ENCODE measurements at regions of chr6 and their contacts with region 1.

Region 1: DNA sequence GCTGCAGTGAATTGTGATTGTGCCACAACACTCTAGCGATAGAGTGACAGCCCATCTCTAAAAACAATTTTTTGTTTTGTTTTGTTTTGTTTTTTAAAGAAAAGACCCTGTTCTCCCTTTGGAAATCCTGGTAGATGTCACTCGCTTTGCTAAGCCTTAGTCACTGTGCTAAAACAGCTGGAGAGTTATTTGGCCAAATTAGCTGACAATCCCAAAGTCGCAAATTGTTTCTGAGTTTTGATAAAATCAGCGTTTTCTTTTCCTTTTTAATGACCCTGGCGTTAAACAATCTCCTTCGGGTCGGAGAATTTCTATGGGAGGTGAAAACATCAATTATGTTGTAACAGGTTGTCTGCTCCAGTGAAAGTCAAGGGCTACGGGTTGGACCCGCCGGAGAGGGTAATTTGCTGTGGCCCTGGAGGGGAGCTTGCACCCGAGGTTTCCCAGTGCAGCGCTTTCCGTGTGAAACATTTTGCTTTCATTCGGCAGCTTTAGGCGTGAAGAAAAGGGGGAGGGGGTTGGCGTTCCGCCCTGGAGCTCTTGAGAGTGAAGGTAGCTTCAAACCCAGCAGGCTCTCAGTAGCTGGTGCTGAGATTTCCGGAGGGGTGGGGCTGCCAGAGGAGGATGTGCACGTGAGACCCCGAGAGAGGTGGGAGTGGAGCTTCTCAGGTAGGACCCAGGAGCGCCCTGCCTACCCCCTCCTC is 296.6 kb downstream of the PHACTR1 start:
- DNase-seq: peak; percentile 58 to 82
- H3K4me3 ChIP-seq: peak overlapping the region; percentile 55 to 75 (median 68)
- H3K27ac ChIP-seq: no peak overlapping the region
- H3K4me1 ChIP-seq: peaks cover 2 to 17% (median 11%) of the 10 kb centered on the region in 4 experiments; a peak in 6 of 7 replicates
- H3K27me3 ChIP-seq: peaks cover 5 to 43% (median 34%) of the 10 kb centered on the region in 4 experiments
- CTCF ChIP-seq: no peak
- EP300 ChIP-seq: no peak
- POLR2A ChIP-seq: no peak
- RAD21 ChIP-seq: no peak

Region 2: GRCh38 chr6:12992770-12993169 is 20.4 kb before region 1 on chr6:
- CTCF ChIA-PET with region 1: no interaction called
- POLR2A ChIA-PET with region 1: interaction called, 13 read pairs
- DNase-seq: peak in 1 of 2 experiments; percentile 54
- H3K4me3 ChIP-seq: peak overlapping the region in 1 of 4 experiments; percentile 30; a peak in 1 of 8 replicates
- H3K27ac ChIP-seq: peak overlapping the region; percentile 70; the same call in 1 of the 2 replicates
- H3K4me1 ChIP-seq: peaks cover 2 to 5% (median 2%) of the 10 kb centered on the region in 4 experiments; a peak in 4 of 7 replicates
- H3K27me3 ChIP-seq: no peaks in the 10 kb centered on the region
- CTCF ChIP-seq: no peak
- EP300 ChIP-seq: no peak
- POLR2A ChIP-seq: peak in 1 of 2 experiments; percentile 35; a peak in 1 of 3 replicates
- RAD21 ChIP-seq: no peak

Region 3: GRCh38 chr6:13038741-13039190 is 25.6 kb after region 1 on chr6:
- CTCF ChIA-PET with region 1: no interaction called
- POLR2A ChIA-PET with region 1: no interaction called
- DNase-seq: no peak
- H3K4me3 ChIP-seq: no peak overlapping the region
- H3K27ac ChIP-seq: no peak overlapping the region
- H3K4me1 ChIP-seq: no peaks in the 10 kb centered on the region
- H3K27me3 ChIP-seq: no peaks in the 10 kb centered on the region
- CTCF ChIP-seq: no peak
- EP300 ChIP-seq: no peak
- POLR2A ChIP-seq: no peak
- RAD21 ChIP-seq: no peak